Activated naive CD4-positive, alpha-beta T cell treated with anti-CD3 and anti-CD28 coated beads for 36 hours (primary cell): ENCODE measurements at regions of chr16 and their contacts with region 1.

Region 1: GRCh38 chr16:10988164-10988803 is 43.9 kb downstream of the CLEC16A start:
- DNase-seq: peak; percentile 95
- H3K4me3 Mint-ChIP-seq: peak overlapping the region; percentile 22
- H3K27ac Mint-ChIP-seq: peak overlapping the region; percentile 87
- H3K4me1 Mint-ChIP-seq: peaks cover 79% of the 10 kb centered on the region
- H3K27me3 Mint-ChIP-seq: no peaks in the 10 kb centered on the region

Region 2: DNA sequence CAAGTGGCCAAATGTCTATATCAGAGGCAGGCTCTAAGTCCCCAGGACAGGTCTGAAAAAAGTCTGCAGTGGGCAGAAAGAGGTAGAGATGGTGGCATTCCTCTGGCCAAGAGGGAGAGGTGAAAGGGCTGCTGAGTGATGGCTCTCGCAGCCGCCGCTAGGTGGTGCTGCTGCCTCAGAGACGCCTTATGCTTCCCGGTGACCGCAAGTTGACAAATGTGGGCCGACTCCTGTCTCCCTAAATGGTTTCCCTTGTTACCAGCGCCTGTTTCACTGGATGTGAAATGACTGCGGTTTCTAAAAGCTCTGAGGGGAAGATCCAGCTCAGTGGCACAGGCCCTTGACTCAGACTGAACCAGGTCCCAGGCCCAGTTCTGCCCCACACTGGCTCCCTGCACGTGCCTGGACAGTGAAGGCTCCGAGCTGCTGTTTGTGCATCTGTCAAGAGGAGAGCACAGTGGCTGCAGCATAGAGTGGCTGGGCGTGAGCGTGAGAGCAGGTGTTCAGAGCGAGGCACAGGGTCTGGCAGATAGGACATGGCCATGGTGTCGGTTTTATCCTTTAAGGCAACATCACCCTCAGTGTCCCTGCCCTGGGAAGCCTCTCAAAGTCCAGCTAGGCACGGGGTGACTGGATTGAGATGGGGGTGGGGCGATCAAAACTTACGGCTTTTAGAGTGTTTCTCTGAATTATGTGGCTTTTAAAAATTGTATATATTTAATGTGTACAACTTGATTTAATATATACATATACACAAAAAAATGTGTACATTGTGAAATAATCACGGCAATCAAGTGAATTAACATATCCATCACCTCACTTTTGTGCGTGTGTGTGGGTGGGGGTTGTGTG is 24.0 kb before region 1 on chr16:
- CTCF ChIA-PET with region 1: interaction called, 31 read pairs
- intact Hi-C with region 1: loop called (anchors 1 kb)
- DNase-seq: peak; percentile 92
- H3K4me3 Mint-ChIP-seq: peak overlapping the region; percentile 43
- H3K27ac Mint-ChIP-seq: peak overlapping the region; percentile 92
- H3K4me1 Mint-ChIP-seq: peaks cover 39% of the 10 kb centered on the region
- H3K27me3 Mint-ChIP-seq: no peaks in the 10 kb centered on the region

Region 3: GRCh38 chr16:11079652-11080187 is 91.4 kb after region 1 on chr16:
- CTCF ChIA-PET with region 1: interaction called, 5 read pairs
- intact Hi-C with region 1: loop called (anchors 1 kb)
- DNase-seq: peak; percentile 74
- H3K4me3 Mint-ChIP-seq: peak overlapping the region; percentile 36
- H3K27ac Mint-ChIP-seq: peak overlapping the region; percentile 96
- H3K4me1 Mint-ChIP-seq: peaks cover 61% of the 10 kb centered on the region
- H3K27me3 Mint-ChIP-seq: no peaks in the 10 kb centered on the region

Region 4: DNA sequence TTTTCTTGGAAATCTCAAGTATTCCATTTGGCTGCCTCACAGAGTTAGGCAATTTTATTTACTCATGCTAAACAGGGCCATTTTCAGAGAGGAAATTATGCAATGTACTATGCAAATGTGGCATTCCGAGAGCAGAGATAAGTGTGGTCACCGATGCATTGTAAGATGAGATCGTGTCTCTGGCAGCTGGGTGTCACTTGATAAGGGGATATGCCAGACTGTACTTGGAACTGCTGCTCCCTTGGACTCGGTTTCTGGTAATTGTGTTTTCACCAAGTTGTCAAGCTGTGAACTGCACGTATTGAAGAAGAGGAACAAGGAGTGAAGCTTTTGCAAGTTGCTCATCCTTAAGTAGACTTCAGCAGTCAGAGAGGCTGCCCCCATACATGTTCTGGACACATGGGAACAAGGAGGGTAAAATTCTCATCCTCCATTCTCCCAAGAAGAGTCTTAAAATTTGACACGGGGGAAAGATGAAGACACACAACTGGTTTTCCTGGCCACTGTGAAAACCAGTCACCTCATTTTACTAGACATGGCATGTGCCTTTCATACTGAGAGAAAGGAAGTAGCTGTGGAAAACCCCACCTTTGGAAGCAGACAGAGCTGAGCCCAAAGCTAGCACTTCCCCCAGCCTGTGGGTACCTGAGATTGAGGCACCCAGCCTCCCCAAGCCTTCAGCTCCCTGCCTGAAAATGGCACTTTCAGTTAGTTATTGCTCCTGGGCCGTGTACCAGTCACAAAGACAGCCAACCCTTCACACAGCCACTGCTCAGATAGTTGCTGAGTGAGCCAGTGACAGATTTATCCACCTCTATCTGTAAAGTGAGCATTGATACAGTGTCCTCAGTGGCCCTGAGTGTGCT is 117.0 kb after region 1 on chr16:
- CTCF ChIA-PET with region 1: interaction called, 3 read pairs
- intact Hi-C with region 1: loop called (anchors 1 kb)
- DNase-seq: peak; percentile 74
- H3K4me3 Mint-ChIP-seq: no peak overlapping the region
- H3K27ac Mint-ChIP-seq: peak overlapping the region; percentile 84
- H3K4me1 Mint-ChIP-seq: peaks cover 41% of the 10 kb centered on the region
- H3K27me3 Mint-ChIP-seq: no peaks in the 10 kb centered on the region

Region 5: GRCh38 chr16:11155284-11155806 is 167.1 kb after region 1 on chr16:
- CTCF ChIA-PET with region 1: no interaction called
- intact Hi-C with region 1: no loop called
- DNase-seq: no peak
- H3K4me3 Mint-ChIP-seq: no peak overlapping the region
- H3K27ac Mint-ChIP-seq: no peak overlapping the region
- H3K4me1 Mint-ChIP-seq: peaks cover 5% of the 10 kb centered on the region
- H3K27me3 Mint-ChIP-seq: no peaks in the 10 kb centered on the region

Region 6: GRCh38 chr16:11224096-11224893 is 236.0 kb after region 1 on chr16:
- CTCF ChIA-PET with region 1: interaction called, 3 read pairs
- intact Hi-C with region 1: loop called (anchors 1 kb)
- DNase-seq: peak; percentile 86
- H3K4me3 Mint-ChIP-seq: peak overlapping the region; percentile 35
- H3K27ac Mint-ChIP-seq: peak overlapping the region; percentile 96
- H3K4me1 Mint-ChIP-seq: peaks cover 51% of the 10 kb centered on the region
- H3K27me3 Mint-ChIP-seq: no peaks in the 10 kb centered on the region

Region 7: GRCh38 chr16:11345040-11345862 is 357.0 kb after region 1 on chr16 and contains the start of gene RMI2:
- CTCF ChIA-PET with region 1: no interaction called
- intact Hi-C with region 1: loop called (anchors 1 kb)
- DNase-seq: peak; percentile 98
- H3K4me3 Mint-ChIP-seq: peak within 1 kb of the TSS; percentile 90
- H3K27ac Mint-ChIP-seq: peak within 1 kb of the TSS; percentile 83
- H3K4me1 Mint-ChIP-seq: peaks cover 46% of the 10 kb centered on the region
- H3K27me3 Mint-ChIP-seq: no peaks in the 10 kb centered on the region
- total RNA-seq, gene RMI2: 82.8 to 86.2 TPM